Heart left ventricle (tissue), 16 donors: ENCODE measurements at regions of chr15 and their contacts with region 1.

Region 1: DNA sequence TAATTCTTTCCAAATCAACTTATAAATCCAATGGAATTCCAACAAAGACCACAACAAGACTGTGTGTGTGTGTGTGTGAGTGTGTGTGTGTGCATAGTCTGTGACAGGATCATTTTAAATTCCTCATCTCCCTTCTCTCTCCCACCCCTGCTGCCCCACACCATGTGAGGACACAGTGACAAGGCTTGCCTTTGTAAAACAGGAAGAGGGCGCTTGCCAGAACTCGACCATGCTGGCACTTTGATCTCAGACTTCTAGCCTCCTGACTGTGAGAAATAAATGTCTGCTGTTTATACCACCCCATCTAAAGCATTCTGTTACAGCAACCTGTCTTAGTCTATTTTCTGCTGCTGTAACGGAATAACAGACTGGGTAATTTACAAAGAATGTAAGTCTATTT is 99.1 kb downstream of the NSMCE3 start:
- DNase-seq: no peak
- ATAC-seq: no peak
- H3K4me3 ChIP-seq: no peak overlapping the region
- H3K27ac ChIP-seq: no peak overlapping the region
- H3K4me1 ChIP-seq: no peaks in the 10 kb centered on the region
- H3K27me3 ChIP-seq: peaks cover 0 to 4% (median 0%) of the 10 kb centered on the region in 9 donors
- CTCF ChIP-seq: no peak
- POLR2A ChIP-seq: no peak

Region 2: DNA sequence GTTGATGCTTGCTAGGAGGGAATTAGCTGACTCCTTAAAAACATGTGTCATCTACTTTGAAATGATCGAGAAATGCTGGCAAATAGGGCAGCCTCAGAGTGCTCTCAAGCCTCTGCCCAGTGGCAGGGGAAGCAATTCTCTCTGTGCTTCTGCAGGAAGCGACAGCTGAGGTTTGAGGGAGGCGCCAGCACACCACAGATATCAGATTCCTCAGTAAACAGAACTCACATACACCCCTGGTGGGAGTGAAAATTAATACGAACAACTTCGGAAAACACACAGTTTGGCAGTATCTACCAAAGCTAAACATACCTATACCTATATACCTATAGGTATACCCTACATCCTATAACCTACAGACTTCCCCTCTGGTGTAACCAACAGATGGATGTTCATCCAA is 37.8 kb after region 1 on chr15:
- intact Hi-C with region 1: loop called in 1 of 10 experiments (anchors 5 kb)
- DNase-seq: no peak
- ATAC-seq: no peak
- H3K4me3 ChIP-seq: no peak overlapping the region
- H3K27ac ChIP-seq: no peak overlapping the region
- H3K4me1 ChIP-seq: no peaks in the 10 kb centered on the region
- H3K27me3 ChIP-seq: peaks cover 0 to 23% (median 0%) of the 10 kb centered on the region in 9 donors
- CTCF ChIP-seq: no peak
- POLR2A ChIP-seq: no peak